ENCODE measurements at regions of chr17 and their contacts with region 1.

Region 1: DNA sequence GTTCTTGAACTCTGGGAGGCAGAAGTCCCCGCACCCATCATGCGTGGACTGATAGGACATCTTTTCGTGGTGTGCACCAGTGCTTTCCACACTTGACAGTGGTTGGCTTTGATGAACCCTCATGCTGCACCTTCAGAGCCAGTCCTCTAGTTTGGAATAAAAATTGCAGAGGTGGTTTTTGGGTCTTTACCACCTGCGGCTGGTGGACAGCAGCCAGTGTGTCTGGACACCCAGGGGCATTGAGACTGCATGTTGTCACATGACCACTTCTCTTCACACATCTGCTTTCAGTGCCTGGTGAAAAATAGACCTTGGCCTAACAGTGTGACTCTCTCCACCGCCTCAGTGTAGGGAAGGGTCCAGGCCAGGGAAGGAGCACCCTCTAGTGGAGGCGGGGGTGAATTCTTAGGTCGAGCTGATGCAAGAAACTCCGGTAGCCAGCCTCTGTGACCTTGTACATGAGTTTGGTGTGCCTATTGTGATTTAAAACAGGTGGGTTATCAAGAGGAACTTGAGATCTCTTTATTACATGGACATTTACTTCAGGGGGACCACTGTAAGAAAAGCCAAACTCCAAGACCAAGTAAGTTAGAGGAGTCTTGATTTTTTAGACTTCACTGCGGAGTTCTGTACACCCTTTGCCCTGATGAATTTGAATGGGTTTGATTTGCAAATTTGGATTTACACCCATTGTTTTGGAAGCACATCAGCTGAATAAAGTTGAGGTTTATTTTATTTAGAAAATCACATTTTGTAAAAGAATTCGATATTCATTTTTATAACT is 17.9 kb downstream of the GOSR2 start:
- DNase-seq: peak; percentile 81
- H3K4me3 Mint-ChIP-seq: no peak overlapping the region
- H3K27ac Mint-ChIP-seq: peak overlapping the region; percentile 51
- H3K4me1 Mint-ChIP-seq: peaks cover 14% of the 10 kb centered on the region
- H3K27me3 Mint-ChIP-seq: no peaks in the 10 kb centered on the region

Region 2: DNA sequence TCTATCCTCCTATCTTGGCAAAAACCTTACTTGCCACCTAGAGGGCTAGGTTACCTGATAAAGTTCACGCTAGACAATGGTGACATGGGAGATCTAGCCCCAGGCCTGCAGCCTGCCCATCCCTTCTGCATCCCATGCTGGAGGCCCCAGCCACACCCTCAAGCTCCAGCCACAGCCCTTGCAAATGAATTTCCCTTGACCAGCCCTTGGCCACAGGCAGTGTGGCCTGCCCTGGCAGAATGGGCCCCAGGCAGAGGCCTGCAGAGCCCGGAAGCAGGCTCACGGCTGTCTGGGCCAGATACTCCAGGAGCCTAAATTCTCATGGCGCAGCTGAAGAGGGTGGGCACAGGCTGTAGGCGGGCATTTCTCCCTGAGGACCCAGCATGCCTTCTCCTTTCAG is 137.3 kb before region 1 on chr17:
- CTCF ChIA-PET with region 1: no interaction called
- POLR2A ChIA-PET with region 1: no interaction called
- intact Hi-C with region 1: no loop called
- DNase-seq: no peak
- H3K4me3 Mint-ChIP-seq: no peak overlapping the region
- H3K27ac Mint-ChIP-seq: no peak overlapping the region
- H3K4me1 Mint-ChIP-seq: no peaks in the 10 kb centered on the region
- H3K27me3 Mint-ChIP-seq: peaks cover 4% of the 10 kb centered on the region

Region 3: DNA sequence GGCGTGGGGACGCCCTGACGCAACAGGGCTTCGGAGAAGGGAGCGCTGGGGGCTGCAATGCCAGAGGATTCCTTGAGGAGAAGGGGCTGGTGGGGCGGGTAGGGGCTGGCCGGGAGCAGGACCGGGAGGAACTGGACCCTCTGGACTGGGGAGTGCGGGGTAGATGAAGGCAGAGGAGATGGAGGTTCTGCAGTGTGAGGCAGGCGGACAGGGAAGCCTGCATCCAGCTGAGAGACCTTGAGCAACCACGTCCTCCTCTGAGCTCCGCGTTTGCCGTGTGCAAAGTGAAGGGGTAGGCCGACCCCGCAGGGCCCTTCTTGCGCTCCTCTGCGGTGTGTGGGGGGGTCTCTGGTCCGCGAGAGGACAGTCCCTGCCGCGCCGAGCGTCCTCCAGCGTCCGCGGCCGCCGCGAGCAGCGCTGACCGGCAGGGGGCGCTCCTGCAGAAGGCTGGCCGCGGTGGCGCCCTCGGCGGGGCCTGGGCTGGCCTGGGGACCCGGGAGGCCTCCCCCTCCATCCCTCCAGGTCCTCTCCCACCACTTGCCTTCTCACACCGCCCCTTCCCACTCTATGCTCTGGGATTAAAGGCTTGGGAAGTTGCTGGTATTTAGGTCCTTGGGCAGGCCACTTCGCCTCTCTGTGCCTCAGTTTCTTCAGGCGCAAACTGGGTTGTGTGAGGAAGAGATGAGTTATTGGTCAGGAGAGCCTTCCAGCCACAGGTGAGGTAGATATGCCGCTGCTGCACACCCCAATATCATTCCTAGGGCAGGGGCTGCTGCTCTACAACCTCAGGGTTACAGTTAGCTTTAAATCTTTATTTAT is 99.0 kb before region 1 on chr17:
- CTCF ChIA-PET with region 1: interaction called, 21 read pairs
- POLR2A ChIA-PET with region 1: no interaction called
- intact Hi-C with region 1: loop called (anchors 2 kb)
- DNase-seq: no peak
- H3K4me3 Mint-ChIP-seq: no peak overlapping the region
- H3K27ac Mint-ChIP-seq: no peak overlapping the region
- H3K4me1 Mint-ChIP-seq: peaks cover 4% of the 10 kb centered on the region
- H3K27me3 Mint-ChIP-seq: peaks cover 38% of the 10 kb centered on the region

Region 4: DNA sequence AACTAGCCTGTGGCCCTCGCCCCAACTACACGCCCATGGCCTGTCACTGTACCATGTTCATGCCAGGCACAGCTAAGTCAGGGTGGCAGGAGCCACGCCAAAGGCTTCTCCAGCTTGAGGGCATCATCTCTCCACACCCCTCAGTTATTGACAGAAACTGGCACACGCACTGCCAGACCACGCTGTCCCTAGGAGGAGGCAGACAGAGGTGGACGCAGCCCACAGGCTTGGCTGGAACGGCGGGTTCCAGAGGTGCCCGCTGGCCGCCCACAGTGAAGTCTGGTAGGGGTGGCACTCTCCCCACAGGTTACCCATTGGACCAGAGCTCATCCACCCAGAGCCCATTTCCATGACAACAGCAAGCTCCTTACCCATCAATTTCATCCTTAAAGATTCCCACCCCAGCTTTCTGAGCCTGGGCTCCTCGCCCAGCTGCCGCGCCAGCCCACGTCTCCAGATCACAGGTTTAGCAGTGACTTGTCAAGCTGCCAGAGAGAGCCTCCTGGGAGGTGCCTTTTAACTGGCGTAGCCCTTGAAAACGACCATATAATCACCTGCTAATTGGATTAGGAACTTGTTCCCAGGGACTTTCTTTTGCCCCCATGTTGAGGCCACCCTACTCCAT is 10.3 kb after region 1 on chr17:
- CTCF ChIA-PET with region 1: interaction called, 17 read pairs
- POLR2A ChIA-PET with region 1: no interaction called
- intact Hi-C with region 1: no loop called
- DNase-seq: no peak
- H3K4me3 Mint-ChIP-seq: no peak overlapping the region
- H3K27ac Mint-ChIP-seq: no peak overlapping the region
- H3K4me1 Mint-ChIP-seq: no peaks in the 10 kb centered on the region
- H3K27me3 Mint-ChIP-seq: no peaks in the 10 kb centered on the region

Region 5: DNA sequence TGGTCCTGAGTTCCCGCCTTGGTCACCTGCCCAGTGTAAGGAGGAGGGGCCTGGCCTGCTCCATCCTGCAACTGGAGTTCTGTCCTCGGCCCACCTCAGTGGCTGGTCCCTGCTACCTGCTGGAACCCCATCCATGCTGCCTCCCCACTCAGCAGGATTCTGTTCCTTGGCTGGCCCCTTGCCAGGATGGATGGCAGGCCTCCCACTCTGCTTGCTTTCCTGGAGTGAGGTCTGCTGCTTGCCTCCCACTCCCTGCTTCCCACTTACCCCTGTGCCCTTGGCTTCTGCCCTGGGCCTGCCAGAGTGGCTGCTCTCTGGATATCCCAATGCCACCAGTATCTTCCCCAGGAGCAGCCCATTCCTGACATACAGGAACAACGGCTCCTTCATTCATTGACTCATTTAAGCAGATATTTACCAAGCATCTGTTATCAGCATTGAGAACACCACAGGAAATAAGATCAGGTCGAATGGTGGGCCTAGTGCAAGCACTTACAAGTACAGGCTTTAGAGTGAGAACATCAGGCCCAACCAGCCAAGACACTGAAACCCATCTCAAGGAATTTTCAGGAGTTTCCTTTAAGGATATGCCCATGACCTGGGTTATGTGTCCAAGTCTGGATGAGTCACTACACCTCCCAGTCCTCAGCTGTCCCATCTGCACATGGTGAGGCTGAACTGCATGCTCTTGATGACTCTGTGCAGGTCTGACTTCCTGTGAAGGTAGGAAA is 55.2 kb after region 1 on chr17:
- CTCF ChIA-PET with region 1: interaction called, 6 read pairs
- POLR2A ChIA-PET with region 1: no interaction called
- intact Hi-C with region 1: loop called (anchors 1 kb)
- DNase-seq: no peak
- H3K4me3 Mint-ChIP-seq: no peak overlapping the region
- H3K27ac Mint-ChIP-seq: no peak overlapping the region
- H3K4me1 Mint-ChIP-seq: no peaks in the 10 kb centered on the region
- H3K27me3 Mint-ChIP-seq: no peaks in the 10 kb centered on the region

Region 6: GRCh38 chr17:47087093-47087492 is 146.3 kb after region 1 on chr17:
- CTCF ChIA-PET with region 1: no interaction called
- POLR2A ChIA-PET with region 1: no interaction called
- intact Hi-C with region 1: no loop called
- DNase-seq: no peak
- H3K4me3 Mint-ChIP-seq: no peak overlapping the region
- H3K27ac Mint-ChIP-seq: no peak overlapping the region
- H3K4me1 Mint-ChIP-seq: peaks cover 12% of the 10 kb centered on the region
- H3K27me3 Mint-ChIP-seq: no peaks in the 10 kb centered on the region